ENCODE measurements at regions of chr11 and their contacts with region 1.

Region 1: DNA sequence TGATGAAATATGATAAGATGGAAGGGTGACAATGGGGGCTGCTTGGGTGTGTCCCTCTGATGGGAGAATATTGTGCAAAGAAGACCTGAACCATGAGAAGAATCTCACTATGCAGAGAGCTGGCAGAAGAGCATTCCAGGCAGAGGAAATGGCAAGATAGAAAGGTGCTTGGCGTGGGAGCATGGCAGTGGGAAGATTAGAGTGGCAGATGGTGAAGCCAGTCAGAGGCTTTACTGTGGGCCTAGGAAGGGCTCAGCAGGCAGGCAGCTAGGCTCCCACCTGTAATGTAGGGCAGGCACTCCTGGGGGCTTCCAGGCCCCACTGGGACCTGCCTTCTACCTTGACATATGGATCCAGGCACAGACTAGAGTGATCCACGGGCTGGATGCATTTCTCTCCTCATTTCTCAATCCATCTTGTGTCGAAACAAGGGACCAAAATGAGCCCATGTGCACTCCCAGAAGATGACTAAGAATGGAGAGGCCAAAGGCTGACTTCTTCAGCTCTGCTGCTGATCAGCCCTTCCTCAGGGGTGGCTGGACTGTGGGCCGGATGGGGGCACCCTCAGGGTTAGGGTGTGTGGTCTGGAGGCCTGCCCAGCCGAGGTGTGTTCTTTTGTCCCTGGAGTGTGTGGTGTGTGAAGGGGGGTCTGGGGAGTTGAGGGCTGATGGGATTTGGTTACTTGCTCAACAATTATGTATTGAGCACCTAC is 88.3 kb downstream of the TSPAN18 start:
- DNase-seq: no peak
- ATAC-seq: no peak
- H3K4me3 ChIP-seq: no peak overlapping the region
- H3K27ac ChIP-seq: peak overlapping the region; percentile 41
- H3K4me1 ChIP-seq: peaks cover 22% of the 10 kb centered on the region
- H3K27me3 ChIP-seq: no peaks in the 10 kb centered on the region

Region 2: DNA sequence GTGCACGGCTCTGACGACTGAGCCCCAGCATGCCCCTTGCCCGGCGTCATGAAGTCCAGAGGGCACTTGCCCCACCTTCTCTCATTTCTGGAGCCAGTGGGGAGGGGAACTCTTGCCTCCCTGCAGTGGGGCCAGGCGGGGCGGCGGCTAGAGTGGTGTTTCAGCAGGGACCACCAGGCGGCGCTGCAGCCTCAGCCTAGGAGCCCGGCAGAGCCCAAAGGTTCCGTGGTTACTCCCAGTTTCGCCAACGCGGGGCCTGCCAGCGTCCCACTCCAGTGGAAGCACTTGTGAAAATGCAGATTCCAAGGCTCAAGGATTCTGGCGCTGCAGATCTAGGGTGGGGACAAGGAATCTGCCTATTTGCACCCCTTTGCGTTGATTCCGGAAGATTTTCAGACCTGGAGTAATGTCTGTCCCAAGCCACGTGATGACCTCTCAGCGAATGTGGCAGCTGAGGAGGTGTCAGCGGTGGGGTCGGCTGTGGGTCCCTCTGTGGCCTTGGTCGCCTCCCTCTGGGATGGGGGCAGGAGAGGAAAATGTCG is 193.8 kb before region 1 on chr11:
- intact Hi-C with region 1: no loop called
- DNase-seq: peak; percentile 82 to 92 (median 91)
- ATAC-seq: peak; percentile 77 to 81
- H3K4me3 ChIP-seq: no peak overlapping the region
- H3K27ac ChIP-seq: no peak overlapping the region
- H3K4me1 ChIP-seq: peaks cover 7% of the 10 kb centered on the region
- H3K27me3 ChIP-seq: no peaks in the 10 kb centered on the region

Region 3: GRCh38 chr11:44877571-44878497 is 62.8 kb after region 1 on chr11:
- intact Hi-C with region 1: loop called in 1 of 4 experiments (anchors 10 kb)
- DNase-seq: peak; percentile 58 to 75 (median 73)
- ATAC-seq: peak; percentile 13 to 71
- H3K4me3 ChIP-seq: no peak overlapping the region
- H3K27ac ChIP-seq: peak overlapping the region; percentile 25
- H3K4me1 ChIP-seq: peaks cover 5% of the 10 kb centered on the region
- H3K27me3 ChIP-seq: no peaks in the 10 kb centered on the region